ENCODE measurements at regions of chr6 and their contacts with region 1.

Region 1: DNA sequence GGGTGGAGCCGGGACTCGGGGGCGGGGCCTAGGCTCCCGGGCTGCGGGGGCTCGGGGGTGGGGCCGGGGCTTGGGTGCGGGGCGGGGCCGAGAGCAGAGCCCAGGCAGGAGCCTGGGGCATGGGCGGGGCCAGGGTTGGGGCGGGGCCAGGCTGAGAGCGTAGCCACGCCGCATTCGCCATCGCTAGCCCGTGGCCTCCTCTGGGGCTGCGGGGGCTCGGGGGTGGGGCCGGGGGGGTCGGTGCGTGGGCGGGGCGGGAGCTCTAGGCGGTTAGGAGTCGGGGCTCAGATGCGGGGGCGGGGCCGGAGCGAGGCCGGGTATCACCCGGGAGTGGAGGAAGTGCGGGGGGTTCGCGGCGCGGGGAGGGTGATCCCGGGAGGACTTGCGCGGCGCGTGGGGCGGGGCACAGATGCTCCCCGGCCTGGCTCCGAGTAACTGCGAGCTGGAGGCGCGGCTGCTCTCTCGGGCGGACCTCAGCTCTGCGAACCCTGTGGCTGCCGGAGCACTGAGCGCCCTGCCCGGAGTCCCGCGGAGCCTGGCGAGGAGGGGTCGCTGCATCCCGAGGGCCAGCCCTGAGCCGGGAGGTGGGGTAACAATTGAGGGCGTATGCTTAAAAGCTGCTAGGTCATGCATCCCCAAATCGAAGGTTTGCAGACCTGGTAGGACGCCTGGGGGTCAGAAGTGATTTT is 434 bp upstream of the ECI2 start:
- DNase-seq: peak; percentile 74 to 93 (median 86)
- ATAC-seq: peak; percentile 97
- H3K4me3 ChIP-seq: peak overlapping the region; percentile 67
- H3K4me3 Mint-ChIP-seq: peak overlapping the region; percentile 83 to 94 (median 87)
- H3K27ac ChIP-seq: peak overlapping the region; percentile 76
- H3K27ac Mint-ChIP-seq: peak overlapping the region; percentile 55 to 88 (median 84)
- H3K4me1 ChIP-seq: peaks cover 10 to 14% of the 10 kb centered on the region in 2 donors
- H3K4me1 Mint-ChIP-seq: peaks cover 20 to 52% (median 37%) of the 10 kb centered on the region in 7 donors
- H3K27me3 ChIP-seq: no peaks in the 10 kb centered on the region
- H3K27me3 Mint-ChIP-seq: no peaks in the 10 kb centered on the region

Region 2: DNA sequence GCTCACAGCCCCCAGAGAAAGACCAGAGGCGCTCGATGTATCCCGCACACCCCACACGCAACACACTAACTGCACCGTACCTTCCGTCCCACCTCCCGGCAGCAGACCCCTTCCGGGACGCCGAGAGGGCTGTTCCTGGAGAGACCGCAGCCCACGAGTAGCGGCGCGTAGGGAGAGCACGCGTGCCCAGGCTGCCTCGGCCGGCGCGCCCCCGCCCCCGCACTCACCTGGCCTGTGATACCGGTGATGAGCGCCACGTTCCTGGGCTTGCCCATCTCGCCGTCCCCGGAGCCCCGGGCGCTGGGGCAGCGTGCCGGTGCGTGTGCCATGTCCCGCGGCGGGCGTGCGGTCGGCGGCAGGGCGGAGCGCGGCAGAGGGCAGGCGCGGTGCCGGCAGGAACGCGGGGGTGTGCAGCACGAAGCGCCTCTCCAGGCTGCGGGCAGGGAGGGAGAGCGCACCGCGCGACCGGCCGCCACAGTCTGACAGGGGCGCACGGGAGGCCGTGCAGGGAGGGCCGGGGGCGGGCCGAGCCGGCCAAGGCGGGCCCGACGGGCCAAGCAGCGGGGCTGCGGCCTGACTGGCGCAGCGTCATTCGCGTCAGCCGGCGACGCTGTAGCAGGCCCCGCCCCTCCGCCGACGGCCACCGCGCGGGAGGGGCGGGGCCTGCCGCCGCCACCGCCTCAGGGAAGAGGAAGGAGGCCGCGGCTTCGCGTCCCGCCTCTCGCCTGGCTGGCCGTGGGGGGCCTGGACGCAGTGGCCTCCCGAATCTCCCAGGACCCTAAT is 1890.5 kb before region 1 on chr6 and contains the start of gene GMDS:
- CTCF ChIA-PET with region 1: no interaction called
- POLR2A ChIA-PET with region 1: no interaction called
- intact Hi-C with region 1: loop called (anchors 2 to 5 kb)
- DNase-seq: peak; percentile 67 to 86 (median 79)
- ATAC-seq: peak; percentile 98
- H3K4me3 ChIP-seq: peak within 1 kb of the TSS; percentile 90
- H3K4me3 Mint-ChIP-seq: peak within 1 kb of the TSS; percentile 86 to 97 (median 93)
- H3K27ac ChIP-seq: peak within 1 kb of the TSS; percentile 96
- H3K27ac Mint-ChIP-seq: peak within 1 kb of the TSS; percentile 84 to 98 (median 95)
- H3K4me1 ChIP-seq: peaks cover 15 to 18% of the 10 kb centered on the region in 2 donors
- H3K4me1 Mint-ChIP-seq: peaks cover 41 to 77% (median 61%) of the 10 kb centered on the region in 7 donors
- H3K27me3 ChIP-seq: no peaks in the 10 kb centered on the region
- H3K27me3 Mint-ChIP-seq: no peaks in the 10 kb centered on the region
- total RNA-seq, gene GMDS: 12.7 to 33.9 (median 18.3) TPM

Region 3: DNA sequence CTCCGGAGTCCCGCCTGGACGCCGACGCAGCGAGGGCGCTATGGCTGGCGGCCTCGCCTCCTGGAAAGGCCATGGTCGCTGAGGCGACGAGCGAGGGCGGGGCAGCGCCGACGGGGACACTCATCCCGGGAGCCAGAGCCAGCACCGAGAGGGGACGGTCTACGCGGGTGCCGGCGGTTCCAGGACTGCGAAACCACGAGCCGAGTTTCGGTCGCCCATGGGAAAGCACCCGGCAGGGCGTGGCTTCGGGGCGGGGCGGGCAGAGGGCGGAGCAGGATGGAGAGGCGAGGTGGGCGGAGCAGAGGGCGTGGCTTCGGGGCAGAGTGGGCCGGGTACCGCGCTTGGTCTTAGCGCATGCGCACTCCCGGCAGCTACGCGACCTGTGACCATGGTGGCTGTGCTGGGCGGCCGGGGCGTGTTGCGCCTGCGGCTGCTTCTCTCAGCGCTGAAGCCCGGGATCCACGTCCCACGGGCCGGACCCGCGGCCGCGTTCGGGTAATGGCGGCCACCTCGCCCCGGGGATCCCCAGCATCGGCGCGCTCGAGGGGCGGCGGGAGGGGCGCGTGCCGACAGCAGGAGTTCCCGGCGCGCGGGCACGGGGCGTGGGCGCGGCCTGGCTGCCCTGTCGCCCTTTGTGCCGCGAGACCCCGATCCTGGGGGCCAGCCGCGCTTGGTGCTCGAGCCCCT is 1017.3 kb before region 1 on chr6 and contains the start of gene BPHL:
- CTCF ChIA-PET with region 1: no interaction called
- POLR2A ChIA-PET with region 1: no interaction called
- intact Hi-C with region 1: loop called (anchors 1 to 2 kb)
- DNase-seq: peak; percentile 97 to 100 (median 99)
- ATAC-seq: peak; percentile 99
- H3K4me3 ChIP-seq: peak within 1 kb of the TSS; percentile 91
- H3K4me3 Mint-ChIP-seq: peak within 1 kb of the TSS; percentile 77 to 93 (median 90)
- H3K27ac ChIP-seq: peak within 1 kb of the TSS; percentile 97
- H3K27ac Mint-ChIP-seq: peak within 1 kb of the TSS; percentile 82 to 97 (median 95)
- H3K4me1 ChIP-seq: peaks cover 0 to 4% of the 10 kb centered on the region in 2 donors
- H3K4me1 Mint-ChIP-seq: peaks cover 12 to 19% (median 18%) of the 10 kb centered on the region in 7 donors
- H3K27me3 ChIP-seq: no peaks in the 10 kb centered on the region
- H3K27me3 Mint-ChIP-seq: peaks cover 0 to 5% (median 0%) of the 10 kb centered on the region in 5 donors
- total RNA-seq, gene BPHL: 7.9 to 18.0 (median 10.0) TPM

Region 4: GRCh38 chr6:3742426-3743344 is 393.1 kb before region 1 on chr6:
- CTCF ChIA-PET with region 1: no interaction called
- POLR2A ChIA-PET with region 1: no interaction called
- intact Hi-C with region 1: loop called in 1 of 2 experiments (anchors 5 kb)
- DNase-seq: peak; percentile 73 to 92 (median 85)
- ATAC-seq: peak; percentile 94
- H3K4me3 ChIP-seq: no peak overlapping the region
- H3K4me3 Mint-ChIP-seq: peak overlapping the region; percentile 26 to 73 (median 58)
- H3K27ac ChIP-seq: no peak overlapping the region
- H3K27ac Mint-ChIP-seq: peak overlapping the region in 7 of 9 donors; percentile 2 to 81 (median 38)
- H3K4me1 ChIP-seq: peaks cover 0 to 5% of the 10 kb centered on the region in 2 donors
- H3K4me1 Mint-ChIP-seq: peaks cover 0 to 14% (median 12%) of the 10 kb centered on the region in 7 donors
- H3K27me3 ChIP-seq: no peaks in the 10 kb centered on the region
- H3K27me3 Mint-ChIP-seq: peaks cover 11 to 29% (median 17%) of the 10 kb centered on the region in 5 donors

Region 5: GRCh38 chr6:4055420-4056041 is 80.3 kb before region 1 on chr6:
- CTCF ChIA-PET with region 1: no interaction called
- POLR2A ChIA-PET with region 1: interaction called, 3 read pairs
- intact Hi-C with region 1: loop called (anchors 1 kb)
- DNase-seq: no peak
- ATAC-seq: peak; percentile 25
- H3K4me3 ChIP-seq: no peak overlapping the region
- H3K4me3 Mint-ChIP-seq: no peak overlapping the region
- H3K27ac ChIP-seq: no peak overlapping the region
- H3K27ac Mint-ChIP-seq: peak overlapping the region in 3 of 9 donors; percentile 63 to 82 (median 64)
- H3K4me1 ChIP-seq: peaks cover 0 to 9% of the 10 kb centered on the region in 2 donors
- H3K4me1 Mint-ChIP-seq: peaks cover 9 to 36% (median 17%) of the 10 kb centered on the region in 7 donors
- H3K27me3 ChIP-seq: no peaks in the 10 kb centered on the region
- H3K27me3 Mint-ChIP-seq: no peaks in the 10 kb centered on the region

Region 6: DNA sequence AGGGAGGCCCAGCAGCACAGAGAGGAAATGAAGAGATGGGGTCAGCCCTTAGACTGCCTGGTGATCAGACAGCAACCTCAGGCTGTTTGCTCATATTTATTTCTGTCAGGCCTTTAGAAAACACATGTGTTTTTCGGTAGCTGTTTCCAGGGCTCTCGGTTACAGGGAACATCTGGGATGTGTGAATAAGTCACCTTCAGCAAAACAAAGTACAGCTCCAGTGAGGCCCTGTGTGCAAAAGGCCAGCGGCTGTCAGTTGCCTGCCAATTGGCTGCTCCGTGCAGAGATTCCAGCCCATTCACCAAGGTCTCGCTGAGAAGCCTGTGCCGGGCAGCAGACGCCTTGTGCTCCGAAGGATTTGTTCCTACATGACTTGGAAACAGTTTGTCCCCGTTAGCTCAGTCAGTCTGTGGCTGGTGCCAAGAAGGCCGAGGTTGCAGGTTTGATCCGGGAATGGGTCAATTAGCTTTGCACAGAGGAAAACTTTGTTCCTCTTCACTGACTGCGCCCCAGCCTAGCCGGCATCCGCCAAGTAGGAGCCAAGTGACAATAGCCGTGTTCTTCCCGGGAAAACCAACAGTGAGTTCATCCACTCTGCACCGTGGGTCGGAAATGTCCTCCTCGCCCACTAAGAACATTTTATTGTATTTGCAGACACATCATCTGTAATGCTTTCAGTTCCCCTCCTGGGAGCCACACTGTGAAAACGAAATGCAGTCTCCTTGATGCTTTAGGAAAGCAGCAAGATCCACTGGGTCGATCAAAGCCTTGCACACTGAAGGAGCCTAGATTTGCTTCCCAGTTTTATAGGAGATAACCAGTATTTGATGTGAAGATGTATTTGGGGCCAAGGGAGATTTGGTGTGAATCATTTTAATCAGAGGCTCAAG is 325.0 kb after region 1 on chr6:
- CTCF ChIA-PET with region 1: no interaction called
- POLR2A ChIA-PET with region 1: no interaction called
- intact Hi-C with region 1: no loop called
- DNase-seq: no peak
- ATAC-seq: no peak
- H3K4me3 ChIP-seq: no peak overlapping the region
- H3K4me3 Mint-ChIP-seq: no peak overlapping the region
- H3K27ac ChIP-seq: no peak overlapping the region
- H3K27ac Mint-ChIP-seq: no peak overlapping the region
- H3K4me1 ChIP-seq: no peaks in the 10 kb centered on the region
- H3K4me1 Mint-ChIP-seq: peaks cover 0 to 3% (median 0%) of the 10 kb centered on the region in 7 donors
- H3K27me3 ChIP-seq: no peaks in the 10 kb centered on the region
- H3K27me3 Mint-ChIP-seq: peaks cover 4 to 15% (median 5%) of the 10 kb centered on the region in 5 donors

Region 7: DNA sequence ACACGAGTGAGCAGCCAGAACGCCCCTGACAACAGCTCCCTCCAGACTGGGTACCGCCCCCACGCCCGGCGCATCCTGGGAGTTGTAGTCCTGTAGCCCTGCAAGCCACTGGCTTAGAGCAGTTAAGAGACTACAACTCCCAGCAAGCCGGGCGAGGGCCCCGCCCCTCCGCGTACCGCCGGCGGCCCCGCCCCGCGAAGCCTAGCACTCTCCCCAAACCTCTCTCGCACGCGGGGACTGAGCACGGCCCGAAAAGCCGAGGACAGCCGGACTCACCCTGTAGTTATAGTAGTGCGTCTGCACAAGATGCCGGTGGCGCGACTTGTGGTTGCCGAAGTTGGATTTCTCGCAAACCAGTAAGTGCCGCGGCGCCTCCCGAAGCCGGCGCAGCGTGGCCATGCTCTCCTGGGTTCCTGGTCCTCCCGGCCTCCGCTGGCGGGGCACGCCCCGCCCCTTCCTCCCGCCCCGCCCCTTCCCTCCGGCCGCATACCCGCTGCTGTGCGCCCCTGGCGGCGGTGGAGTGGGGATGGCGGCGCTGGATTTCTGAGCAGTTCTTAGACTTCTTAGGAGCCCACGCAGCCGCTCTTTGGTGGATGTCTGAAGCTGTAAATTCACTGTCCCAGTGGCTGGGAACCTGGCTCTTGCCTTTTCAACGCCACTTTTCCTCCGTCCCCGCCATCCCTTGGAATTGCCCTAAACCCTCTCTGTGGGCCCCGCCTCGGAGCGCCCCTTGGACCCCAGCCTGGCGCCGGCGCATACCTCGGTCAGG is 868.0 kb after region 1 on chr6 and contains the start of gene RPP40:
- CTCF ChIA-PET with region 1: no interaction called
- POLR2A ChIA-PET with region 1: no interaction called
- intact Hi-C with region 1: loop called (anchors 1 to 2 kb)
- DNase-seq: peak; percentile 97 to 99 (median 99)
- ATAC-seq: peak; percentile 97
- H3K4me3 ChIP-seq: peak within 1 kb of the TSS; percentile 91
- H3K4me3 Mint-ChIP-seq: peak within 1 kb of the TSS; percentile 88 to 95 (median 94)
- H3K27ac ChIP-seq: peak within 1 kb of the TSS; percentile 82
- H3K27ac Mint-ChIP-seq: peak within 1 kb of the TSS; percentile 91 to 98 (median 94)
- H3K4me1 ChIP-seq: peaks cover 9% of the 10 kb centered on the region in 2 donors
- H3K4me1 Mint-ChIP-seq: peaks cover 0 to 20% (median 13%) of the 10 kb centered on the region in 7 donors
- H3K27me3 ChIP-seq: no peaks in the 10 kb centered on the region
- H3K27me3 Mint-ChIP-seq: no peaks in the 10 kb centered on the region
- total RNA-seq, gene RPP40: 3.8 to 8.0 (median 5.1) TPM